AG04450 (cell line): ENCODE measurements at regions of chr16 and their contacts with region 1.

Region 1: GRCh38 chr16:4506450-4506849 is 30.3 kb downstream of the HMOX2 start:
- DNase-seq: no peak
- H3K4me3 ChIP-seq: no peak overlapping the region
- H3K27ac ChIP-seq: peak overlapping the region; percentile 39
- H3K27me3 ChIP-seq: no peaks in the 10 kb centered on the region
- CTCF ChIP-seq: peak; percentile 87

Region 2: GRCh38 chr16:4376126-4376892 is 130.1 kb before region 1 on chr16:
- CTCF ChIA-PET with region 1: no interaction called
- POLR2A ChIA-PET with region 1: no interaction called
- DNase-seq: peak; percentile 57
- H3K4me3 ChIP-seq: peak overlapping the region; percentile 48
- H3K27ac ChIP-seq: peak overlapping the region; percentile 87
- H3K27me3 ChIP-seq: no peaks in the 10 kb centered on the region
- CTCF ChIP-seq: no peak

Region 3: DNA sequence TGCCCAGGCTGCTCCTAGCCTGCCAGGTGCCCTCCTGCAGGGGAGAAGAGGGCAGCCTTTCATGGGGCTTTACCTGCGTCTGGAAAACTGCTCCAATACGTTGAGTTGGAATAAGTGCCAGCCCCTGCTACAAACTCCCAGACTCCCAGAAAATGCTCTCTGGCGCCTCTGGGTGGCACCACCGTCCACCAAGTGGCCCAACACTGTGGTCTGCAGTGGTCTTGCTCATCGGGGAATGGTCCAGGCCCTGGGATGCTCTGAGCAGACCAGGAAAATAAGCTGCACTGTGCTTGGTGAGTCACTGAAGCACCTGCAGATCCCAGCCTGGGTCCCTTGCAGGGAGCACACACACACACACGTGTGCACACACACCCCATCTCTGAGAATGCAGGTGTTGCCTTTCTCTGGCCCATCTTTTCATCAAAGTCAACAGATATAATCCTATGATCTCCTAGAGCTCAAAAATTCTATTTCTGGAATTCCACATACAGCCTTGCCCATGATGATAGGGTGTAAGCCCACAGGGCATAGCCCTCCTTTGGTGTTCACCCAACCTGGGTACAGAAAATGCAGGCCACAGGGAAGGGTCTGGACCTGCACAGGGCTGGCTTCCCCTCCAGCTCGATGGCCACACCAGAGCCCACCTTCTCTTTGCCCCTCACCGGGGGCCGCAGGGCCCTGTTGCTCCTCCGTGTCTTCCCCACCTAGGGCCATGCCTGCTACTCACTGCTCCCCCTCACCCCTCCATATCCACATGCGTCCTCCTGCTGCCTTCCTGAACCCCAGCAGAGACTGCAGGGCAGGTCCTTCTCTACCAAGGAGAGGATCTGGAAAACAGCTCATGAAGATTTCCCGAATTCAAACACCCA is 11.6 kb after region 1 on chr16:
- CTCF ChIA-PET with region 1: interaction called, 45 read pairs
- POLR2A ChIA-PET with region 1: interaction called, 4 read pairs
- DNase-seq: no peak
- H3K4me3 ChIP-seq: no peak overlapping the region
- H3K27ac ChIP-seq: no peak overlapping the region
- H3K27me3 ChIP-seq: no peaks in the 10 kb centered on the region
- CTCF ChIP-seq: peak; percentile 72

Region 4: GRCh38 chr16:4586291-4586690 is 79.8 kb after region 1 on chr16:
- CTCF ChIA-PET with region 1: interaction called, 38 read pairs
- POLR2A ChIA-PET with region 1: no interaction called
- DNase-seq: no peak
- H3K4me3 ChIP-seq: no peak overlapping the region
- H3K27ac ChIP-seq: no peak overlapping the region
- H3K27me3 ChIP-seq: peaks cover 19% of the 10 kb centered on the region
- CTCF ChIP-seq: no peak

Region 5: GRCh38 chr16:4664538-4665418 is 158.3 kb after region 1 on chr16:
- CTCF ChIA-PET with region 1: no interaction called
- POLR2A ChIA-PET with region 1: no interaction called
- DNase-seq: no peak
- H3K4me3 ChIP-seq: no peak overlapping the region
- H3K27ac ChIP-seq: no peak overlapping the region
- H3K27me3 ChIP-seq: no peaks in the 10 kb centered on the region
- CTCF ChIP-seq: no peak

Region 6: DNA sequence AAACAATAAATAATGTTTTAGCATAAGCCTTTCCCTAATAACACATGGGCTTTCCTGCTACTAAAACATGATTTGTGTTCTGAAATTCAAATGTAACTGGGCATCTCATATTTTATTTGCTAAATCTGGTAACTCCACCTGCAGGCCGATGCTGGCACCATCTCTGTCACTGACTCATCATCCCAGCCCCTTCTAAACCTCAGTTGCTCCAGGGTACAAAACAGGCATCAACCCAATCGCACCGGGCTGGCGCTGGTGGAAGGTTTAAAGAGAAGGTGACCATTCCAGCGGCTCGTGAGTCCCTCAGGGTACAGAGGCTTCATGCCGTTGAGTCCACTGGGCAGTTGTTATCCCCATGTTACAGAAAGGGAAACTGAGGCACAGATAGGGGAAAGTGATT is 403.4 kb after region 1 on chr16:
- CTCF ChIA-PET with region 1: no interaction called
- POLR2A ChIA-PET with region 1: no interaction called
- DNase-seq: no peak
- H3K4me3 ChIP-seq: no peak overlapping the region
- H3K27ac ChIP-seq: no peak overlapping the region
- H3K27me3 ChIP-seq: peaks cover 2% of the 10 kb centered on the region
- CTCF ChIP-seq: no peak